Left colon (tissue), 2 donors: ENCODE measurements at regions of chr12 and their contacts with region 1.

Region 1: DNA sequence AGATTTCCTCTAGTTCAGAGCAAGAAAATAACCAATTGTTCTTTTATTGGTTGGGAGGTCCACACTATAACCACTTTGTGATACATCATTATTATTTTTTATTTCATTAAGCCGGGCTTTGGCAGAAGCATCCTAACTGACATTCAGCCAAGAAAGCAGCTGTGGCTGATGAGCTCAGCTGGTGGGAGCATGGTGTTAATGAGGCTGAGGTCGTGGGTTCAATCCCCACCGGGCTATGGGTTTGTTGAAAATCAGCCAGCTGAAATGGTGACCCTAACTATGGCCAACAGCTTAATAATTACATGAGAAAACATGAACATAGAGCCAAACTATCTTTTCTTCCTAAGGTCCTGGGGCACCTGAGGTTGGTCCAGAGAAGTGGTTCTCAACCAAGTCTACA is 378.2 kb downstream of the GLT1D1 start:
- DNase-seq: no peak
- ATAC-seq: no peak

Region 2: DNA sequence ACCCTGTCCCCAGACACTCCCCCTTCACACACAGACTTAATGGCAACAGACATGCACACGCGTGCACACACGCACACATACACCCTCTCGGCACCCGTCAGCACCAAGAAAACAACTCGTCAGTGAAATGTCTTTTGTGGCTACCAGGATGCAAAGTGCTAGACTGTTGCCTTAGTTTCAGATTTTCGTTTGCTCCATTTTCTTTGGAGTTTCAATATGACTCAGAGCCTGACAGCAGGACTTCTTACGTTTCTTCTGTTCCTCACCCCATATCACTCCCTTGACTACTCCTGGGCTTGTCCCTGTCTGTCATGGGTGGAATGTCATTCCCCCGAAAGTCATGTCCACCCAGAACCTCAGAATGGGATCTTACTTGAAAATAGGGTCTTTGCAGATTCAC is 195.4 kb before region 1 on chr12:
- intact Hi-C with region 1: no loop called
- DNase-seq: no peak
- ATAC-seq: no peak

Region 3: DNA sequence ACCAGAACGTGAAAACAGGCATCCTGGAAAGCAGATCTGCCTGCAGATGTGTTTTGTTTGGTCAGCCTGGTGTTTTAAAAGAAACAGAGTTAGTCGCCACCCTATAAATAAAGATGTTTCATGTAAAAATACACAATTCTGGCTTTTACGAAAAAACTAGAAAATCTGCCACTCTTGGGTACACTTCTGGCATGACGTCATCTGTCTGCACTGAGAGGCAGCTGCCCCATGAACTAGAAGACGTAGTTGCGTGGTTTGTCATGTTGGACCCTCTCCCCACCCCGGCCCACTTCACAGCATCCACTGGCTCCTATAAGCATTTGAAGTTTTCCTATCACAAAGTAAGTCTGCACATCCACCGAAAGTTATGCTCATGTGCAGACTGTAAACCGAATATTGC is 14.3 kb after region 1 on chr12:
- intact Hi-C with region 1: loop called in 1 of 2 experiments (anchors 2 kb)
- DNase-seq: no peak
- ATAC-seq: no peak